Activated CD4-positive, alpha-beta T cell treated with anti-CD3 and anti-CD28 coated beads for 36 hours (primary cell): ENCODE measurements at regions of chr9 and their contacts with region 1.

Region 1: DNA sequence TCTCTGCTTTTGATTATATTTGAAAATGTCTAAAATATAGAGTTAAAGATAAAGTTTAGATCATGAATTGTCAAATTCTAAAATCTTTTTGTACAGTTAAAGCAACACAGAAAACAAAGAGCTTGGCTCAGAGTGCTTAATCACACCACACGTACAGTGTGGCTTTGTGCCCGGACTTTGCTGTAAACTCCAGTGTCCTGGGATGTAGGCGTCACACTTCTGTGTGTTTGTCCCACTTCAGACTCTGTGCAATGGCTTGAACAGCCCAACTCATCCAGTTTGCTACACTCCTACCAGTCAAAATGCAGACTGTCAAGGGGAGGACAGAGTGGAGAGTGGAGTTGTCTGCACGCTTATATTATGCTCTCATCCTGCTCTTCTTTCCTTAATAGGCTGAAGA is 45.3 kb downstream of the SMARCA2 start:
- DNase-seq: no peak
- ATAC-seq: no peak
- H3K4me3 Mint-ChIP-seq: no peak overlapping the region
- H3K27ac Mint-ChIP-seq: no peak overlapping the region
- H3K4me1 Mint-ChIP-seq: peaks cover 13% of the 10 kb centered on the region
- H3K27me3 Mint-ChIP-seq: no peaks in the 10 kb centered on the region

Region 2: DNA sequence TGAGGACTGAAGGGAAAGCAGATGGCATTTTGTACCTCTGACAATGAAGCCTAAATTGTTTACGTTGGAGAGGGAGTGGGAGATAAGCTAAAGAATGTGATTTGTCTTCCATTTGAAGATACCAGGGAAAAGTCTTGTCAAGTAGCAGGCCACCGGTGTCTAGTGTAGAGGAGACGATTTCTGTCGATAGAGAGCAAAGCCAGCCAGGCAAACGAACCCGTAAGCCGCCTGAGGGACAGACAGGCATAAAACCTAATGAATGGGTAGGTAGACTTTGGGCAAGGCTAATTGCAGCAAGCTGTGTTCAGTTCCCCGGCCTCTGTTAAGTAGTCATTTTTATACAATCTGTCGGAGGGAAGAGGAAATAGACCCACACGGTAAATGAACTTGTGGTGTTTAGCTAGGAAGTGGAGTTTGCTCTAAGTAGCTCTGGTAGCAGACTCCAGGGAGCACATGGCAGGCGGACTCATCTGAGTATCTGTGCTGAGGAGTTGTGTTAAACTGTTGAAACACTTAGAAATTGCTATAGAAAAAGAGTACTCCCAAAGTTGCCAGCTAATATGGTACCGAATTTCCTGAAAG is 16.5 kb before region 1 on chr9:
- CTCF ChIA-PET with region 1: interaction called, 3 read pairs
- POLR2A ChIA-PET with region 1: no interaction called
- intact Hi-C with region 1: loop called in 1 of 2 experiments (anchors 2 kb)
- DNase-seq: no peak
- ATAC-seq: peak; percentile 47
- H3K4me3 Mint-ChIP-seq: no peak overlapping the region
- H3K27ac Mint-ChIP-seq: peak overlapping the region; percentile 60
- H3K4me1 Mint-ChIP-seq: peaks cover 51% of the 10 kb centered on the region
- H3K27me3 Mint-ChIP-seq: no peaks in the 10 kb centered on the region